PC-9 (cell line): ENCODE measurements at regions of chr12 and their contacts with region 1.

Region 1: DNA sequence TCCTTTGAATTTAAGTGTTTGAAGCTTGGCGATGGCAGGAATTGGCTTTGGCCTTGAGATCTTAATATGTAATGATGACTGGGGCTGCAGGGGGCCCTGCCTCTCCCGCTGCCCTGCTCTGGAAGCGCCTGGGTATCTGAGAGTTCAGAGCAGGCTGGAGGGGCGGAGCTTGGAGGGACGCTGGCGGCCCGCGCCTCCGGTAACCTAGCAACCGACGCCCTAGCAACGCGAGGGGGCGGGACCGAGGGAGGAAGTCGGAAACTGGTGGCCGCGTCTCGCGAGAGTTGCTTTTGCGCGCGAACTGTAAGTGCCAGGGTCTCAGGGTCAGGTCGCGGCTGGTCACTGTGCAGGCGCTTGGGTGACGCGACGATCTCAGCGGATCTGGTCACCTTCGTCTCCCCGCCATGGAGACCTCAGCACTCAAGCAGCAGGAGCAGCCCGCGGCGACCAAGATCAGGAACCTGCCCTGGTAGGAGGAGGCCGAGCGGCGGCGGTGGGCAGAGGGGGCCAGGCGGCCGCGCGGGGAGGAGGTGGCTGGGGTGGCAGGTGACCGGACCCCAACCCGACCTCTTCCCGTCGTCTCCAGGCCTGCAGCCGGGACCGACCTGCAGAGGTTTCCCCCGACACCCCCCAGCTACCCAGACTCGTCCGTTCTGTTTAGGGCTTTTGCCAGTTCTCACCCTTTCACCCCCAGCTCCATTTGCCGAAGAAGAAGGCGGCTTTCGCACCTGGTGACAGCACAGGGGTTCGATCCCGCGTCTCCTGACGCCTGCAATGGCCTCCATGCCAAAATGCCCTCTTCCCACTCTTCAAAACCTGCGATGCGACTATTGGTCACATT is at the start of gene RFC5:
- DNase-seq: peak; percentile 90 to 97
- H3K4me3 ChIP-seq: peak within 1 kb of the TSS; percentile 89
- H3K27ac ChIP-seq: no peak within 1 kb of the TSS
- H3K4me1 ChIP-seq: peaks cover 16% of the 10 kb centered on the region
- H3K27me3 ChIP-seq: no peaks in the 10 kb centered on the region
- CTCF ChIP-seq: no peak
- total RNA-seq, gene RFC5: 30.3 and 34.7 TPM in 2 replicates

Region 2: DNA sequence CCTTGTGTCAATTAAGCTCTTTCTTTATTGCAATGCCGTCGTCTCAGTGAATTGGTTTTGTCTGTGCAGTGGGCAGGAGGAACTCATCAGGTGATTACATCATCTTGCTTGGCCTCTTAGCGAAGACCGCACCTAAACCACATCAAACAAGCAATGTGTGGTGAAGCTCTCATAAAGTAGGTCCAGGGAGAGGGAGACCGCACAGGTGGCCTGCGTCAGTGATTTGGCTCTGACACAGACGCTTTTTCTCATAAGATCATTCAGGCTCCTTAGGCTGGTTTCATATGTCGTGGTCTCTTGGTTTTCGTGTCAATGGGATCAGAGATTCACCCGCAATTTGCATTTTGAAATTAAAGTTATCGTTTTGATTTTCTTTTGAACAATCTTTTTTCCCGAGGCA is 910.7 kb before region 1 on chr12:
- CTCF ChIA-PET with region 1: no interaction called
- POLR2A ChIA-PET with region 1: interaction called, 11 read pairs
- intact Hi-C with region 1: no loop called
- DNase-seq: peak; percentile 25 to 89
- H3K4me3 ChIP-seq: no peak overlapping the region
- H3K27ac ChIP-seq: no peak overlapping the region
- H3K4me1 ChIP-seq: peaks cover 10% of the 10 kb centered on the region; the same call in 1 of the 2 replicates
- H3K27me3 ChIP-seq: peaks cover 59% of the 10 kb centered on the region
- CTCF ChIP-seq: no peak

Region 3: GRCh38 chr12:117158911-117159310 is 857.7 kb before region 1 on chr12:
- CTCF ChIA-PET with region 1: no interaction called
- POLR2A ChIA-PET with region 1: no interaction called
- intact Hi-C with region 1: no loop called
- DNase-seq: peak in 1 of 2 experiments; percentile 51
- H3K4me3 ChIP-seq: no peak overlapping the region
- H3K27ac ChIP-seq: no peak overlapping the region
- H3K4me1 ChIP-seq: no peaks in the 10 kb centered on the region
- H3K27me3 ChIP-seq: no peaks in the 10 kb centered on the region
- CTCF ChIP-seq: no peak

Region 4: DNA sequence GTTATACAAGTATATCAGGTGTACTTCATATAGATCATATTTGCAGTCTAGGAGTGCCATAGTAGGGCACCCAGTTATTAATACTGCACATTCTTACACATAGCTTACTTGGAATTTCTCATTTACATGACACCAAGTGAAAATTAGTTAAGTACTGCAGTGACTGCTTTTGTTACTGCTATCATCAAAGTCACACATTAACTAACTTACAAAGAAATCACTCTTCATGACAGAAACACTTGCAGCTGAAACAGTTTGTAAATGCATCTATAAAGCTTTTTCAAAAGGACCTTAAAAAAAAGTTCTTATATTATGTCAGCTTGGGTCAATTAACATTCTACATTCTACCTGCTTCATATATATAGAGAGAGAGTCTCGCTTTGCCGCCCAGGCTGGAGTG is 17.9 kb before region 1 on chr12:
- CTCF ChIA-PET with region 1: interaction called, 11 read pairs
- POLR2A ChIA-PET with region 1: no interaction called
- intact Hi-C with region 1: no loop called
- DNase-seq: no peak
- H3K4me3 ChIP-seq: no peak overlapping the region
- H3K27ac ChIP-seq: no peak overlapping the region
- H3K4me1 ChIP-seq: no peaks in the 10 kb centered on the region
- H3K27me3 ChIP-seq: no peaks in the 10 kb centered on the region
- CTCF ChIP-seq: no peak

Region 5: DNA sequence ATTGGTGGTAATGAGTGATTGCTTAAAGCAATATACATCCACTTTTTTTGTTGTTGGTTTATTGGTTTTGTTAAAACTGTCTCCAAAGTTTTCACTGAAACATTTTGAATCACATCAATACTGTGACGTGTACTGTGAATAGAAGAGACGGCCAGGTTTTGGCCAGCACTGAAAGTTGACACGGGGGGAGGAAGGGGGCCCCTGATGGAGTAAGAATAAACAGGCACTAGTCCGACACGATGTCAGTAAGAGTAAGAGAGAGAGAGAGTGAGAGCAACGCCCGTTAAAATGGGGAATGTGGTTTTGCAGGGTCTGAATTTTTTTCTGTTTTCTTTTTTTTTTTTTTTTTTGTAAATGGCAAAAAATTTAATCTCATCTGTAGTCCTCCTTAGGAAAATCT is 134.0 kb after region 1 on chr12:
- CTCF ChIA-PET with region 1: no interaction called
- POLR2A ChIA-PET with region 1: interaction called, 51 read pairs
- intact Hi-C with region 1: no loop called
- DNase-seq: no peak
- H3K4me3 ChIP-seq: no peak overlapping the region
- H3K27ac ChIP-seq: no peak overlapping the region
- H3K4me1 ChIP-seq: no peaks in the 10 kb centered on the region
- H3K27me3 ChIP-seq: no peaks in the 10 kb centered on the region
- CTCF ChIP-seq: no peak

Region 6: GRCh38 chr12:118193958-118194357 is 177.3 kb after region 1 on chr12:
- CTCF ChIA-PET with region 1: no interaction called
- POLR2A ChIA-PET with region 1: no interaction called
- intact Hi-C with region 1: no loop called
- DNase-seq: no peak
- H3K4me3 ChIP-seq: no peak overlapping the region
- H3K27ac ChIP-seq: no peak overlapping the region
- H3K4me1 ChIP-seq: no peaks in the 10 kb centered on the region
- H3K27me3 ChIP-seq: no peaks in the 10 kb centered on the region
- CTCF ChIP-seq: no peak

Region 7: DNA sequence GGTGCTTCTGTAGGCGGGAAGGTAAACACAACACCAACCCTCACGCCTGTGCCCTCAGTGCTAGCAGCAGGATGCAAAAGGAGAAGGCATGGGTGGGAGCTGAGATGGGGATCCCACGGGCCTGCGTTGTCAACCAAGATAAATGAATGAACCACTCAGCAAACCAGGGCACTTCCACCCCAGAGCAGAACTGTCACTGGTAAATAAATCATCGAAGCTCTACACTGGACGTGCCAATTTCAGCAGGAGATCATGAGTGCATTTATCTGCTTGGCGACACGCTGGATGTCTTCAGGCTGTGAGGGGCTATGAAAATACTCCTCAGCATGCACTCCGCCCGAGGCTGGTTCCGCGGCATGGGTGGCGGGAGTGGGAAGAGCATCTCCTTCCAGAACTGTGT is 1195.2 kb after region 1 on chr12:
- CTCF ChIA-PET with region 1: no interaction called
- POLR2A ChIA-PET with region 1: interaction called, 29 read pairs
- intact Hi-C with region 1: no loop called
- DNase-seq: no peak
- H3K4me3 ChIP-seq: no peak overlapping the region
- H3K27ac ChIP-seq: no peak overlapping the region
- H3K4me1 ChIP-seq: peaks cover 15% of the 10 kb centered on the region; the same call in 1 of the 2 replicates
- H3K27me3 ChIP-seq: peaks cover 12% of the 10 kb centered on the region; the same call in 1 of the 2 replicates
- CTCF ChIP-seq: no peak